Sigmoid colon (tissue), 7 donors: ENCODE measurements at regions of chr15 and their contacts with region 1.

Region 1: DNA sequence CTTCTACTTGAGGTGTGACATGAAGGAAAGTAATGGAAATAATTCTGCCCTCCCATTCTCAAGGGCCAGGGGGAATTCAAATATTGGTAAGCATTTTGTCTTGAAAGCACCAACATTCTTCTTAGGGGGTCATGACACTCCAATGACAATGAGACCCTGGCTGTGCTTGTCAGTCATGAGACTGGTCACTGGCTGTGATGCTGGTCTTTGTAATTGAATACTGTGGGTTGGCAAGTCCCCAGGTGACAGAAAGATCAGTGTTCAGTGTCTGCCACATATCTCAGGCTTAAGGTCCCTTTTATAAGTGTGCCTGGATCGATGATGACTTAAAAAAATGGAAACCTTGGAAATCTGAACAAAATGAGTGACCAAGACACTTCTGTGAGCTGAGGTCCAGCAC is 151.4 kb downstream of the SNRPN start:
- DNase-seq: no peak
- H3K4me3 ChIP-seq: no peak overlapping the region
- H3K27ac ChIP-seq: no peak overlapping the region
- H3K4me1 ChIP-seq: no peaks in the 10 kb centered on the region
- H3K27me3 ChIP-seq: no peaks in the 10 kb centered on the region
- CTCF ChIP-seq: no peak
- EP300 ChIP-seq: no peak
- POLR2A ChIP-seq: no peak

Region 2: GRCh38 chr15:25053000-25053815 is 53.0 kb before region 1 on chr15:
- intact Hi-C with region 1: loop called (anchors 10 kb)
- DNase-seq: peak; percentile 29
- H3K4me3 ChIP-seq: no peak overlapping the region
- H3K27ac ChIP-seq: no peak overlapping the region
- H3K4me1 ChIP-seq: no peaks in the 10 kb centered on the region
- H3K27me3 ChIP-seq: no peaks in the 10 kb centered on the region
- CTCF ChIP-seq: no peak
- EP300 ChIP-seq: no peak
- POLR2A ChIP-seq: no peak

Region 3: GRCh38 chr15:25362545-25362944 is 256.3 kb after region 1 on chr15:
- intact Hi-C with region 1: no loop called
- DNase-seq: no peak
- H3K4me3 ChIP-seq: no peak overlapping the region
- H3K27ac ChIP-seq: peak overlapping the region in 3 of 4 donors; percentile 33 to 51 (median 35)
- H3K4me1 ChIP-seq: peaks cover 0 to 23% (median 4%) of the 10 kb centered on the region in 4 donors
- H3K27me3 ChIP-seq: no peaks in the 10 kb centered on the region
- CTCF ChIP-seq: no peak
- EP300 ChIP-seq: no peak
- POLR2A ChIP-seq: no peak